Activated CD4-positive, alpha-beta T cell treated with anti-CD3 and anti-CD28 coated beads for 36 hours (primary cell): ENCODE measurements at regions of chr10 and their contacts with region 1.

Region 1: DNA sequence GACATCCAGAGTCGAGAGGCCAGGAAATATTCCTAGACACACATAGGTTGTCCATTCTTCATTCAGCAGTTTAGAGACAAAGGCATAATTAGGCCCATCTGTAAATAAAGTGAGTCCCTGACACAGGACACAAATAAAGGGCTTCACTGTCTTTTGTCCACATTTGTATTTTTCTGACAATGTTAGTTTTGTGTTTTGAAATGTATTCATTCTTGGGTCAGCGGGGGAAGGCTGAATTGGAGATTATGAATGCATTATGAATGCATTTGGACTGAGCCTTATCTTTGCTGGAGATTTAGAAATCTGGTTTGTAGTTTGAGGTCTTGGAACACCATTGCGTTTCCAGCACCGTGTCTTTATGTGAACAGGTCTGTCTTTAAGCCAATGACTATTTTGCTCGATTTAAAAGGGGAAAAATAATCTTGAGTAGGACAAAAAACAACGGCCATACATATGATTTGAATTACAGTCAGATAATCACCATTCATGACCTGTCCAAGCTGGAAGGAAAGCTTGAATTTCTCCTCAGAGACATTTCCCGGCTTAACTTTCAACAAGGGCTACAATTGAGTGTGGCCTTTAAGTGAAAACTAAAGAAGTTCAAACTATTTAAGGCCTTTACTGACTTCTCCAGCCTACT is 334.8 kb downstream of the WDR11 start:
- DNase-seq: no peak
- ATAC-seq: no peak
- H3K4me3 Mint-ChIP-seq: no peak overlapping the region
- H3K27ac Mint-ChIP-seq: no peak overlapping the region
- H3K4me1 Mint-ChIP-seq: no peaks in the 10 kb centered on the region
- H3K27me3 Mint-ChIP-seq: no peaks in the 10 kb centered on the region

Region 2: DNA sequence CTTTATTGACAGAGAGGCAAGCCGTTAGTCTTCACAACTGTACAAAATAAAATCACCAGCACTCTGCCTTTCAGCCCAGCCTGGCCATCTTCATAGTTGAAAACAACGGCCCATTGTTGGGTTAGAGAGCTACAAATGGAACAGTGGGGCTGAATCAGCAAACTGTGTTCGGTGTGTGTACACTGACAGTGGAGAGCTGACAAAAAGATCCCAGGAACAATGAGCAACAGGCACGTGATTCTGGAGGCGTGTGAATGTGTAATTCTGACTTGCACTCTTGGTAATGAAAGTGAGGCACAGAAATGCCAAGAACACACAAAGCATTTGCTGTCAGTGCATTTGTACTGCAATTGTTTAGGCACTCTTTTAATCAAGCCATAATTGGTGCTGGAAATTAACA is 31.1 kb before region 1 on chr10:
- CTCF ChIA-PET with region 1: no interaction called
- POLR2A ChIA-PET with region 1: no interaction called
- intact Hi-C with region 1: no loop called
- DNase-seq: no peak
- ATAC-seq: no peak
- H3K4me3 Mint-ChIP-seq: no peak overlapping the region
- H3K27ac Mint-ChIP-seq: no peak overlapping the region
- H3K4me1 Mint-ChIP-seq: peaks cover 3% of the 10 kb centered on the region
- H3K27me3 Mint-ChIP-seq: peaks cover 9% of the 10 kb centered on the region

Region 3: DNA sequence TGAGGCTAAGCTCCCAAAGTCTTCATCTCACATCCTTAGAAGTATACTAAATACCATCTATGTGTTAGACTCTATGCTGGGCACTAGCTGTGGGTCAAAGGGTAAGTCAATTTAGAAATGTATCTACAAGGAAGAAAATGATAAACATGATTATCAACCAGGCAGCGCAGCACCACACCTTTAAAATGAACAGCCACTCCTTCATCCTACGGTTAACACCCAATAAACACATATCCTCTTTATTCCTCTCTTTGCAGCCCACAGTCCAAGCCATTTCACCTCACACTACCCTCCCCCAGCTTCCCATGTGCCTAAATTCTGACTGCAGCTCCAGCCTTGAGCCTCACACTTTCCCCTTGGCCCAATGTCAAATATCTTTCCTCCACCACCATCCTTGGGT is 49.8 kb after region 1 on chr10:
- CTCF ChIA-PET with region 1: no interaction called
- POLR2A ChIA-PET with region 1: no interaction called
- intact Hi-C with region 1: loop called in 1 of 2 experiments (anchors 1 kb)
- DNase-seq: no peak
- ATAC-seq: no peak
- H3K4me3 Mint-ChIP-seq: no peak overlapping the region
- H3K27ac Mint-ChIP-seq: no peak overlapping the region
- H3K4me1 Mint-ChIP-seq: no peaks in the 10 kb centered on the region
- H3K27me3 Mint-ChIP-seq: no peaks in the 10 kb centered on the region